RWPE1 (cell line): ENCODE measurements at regions of chr1 and their contacts with region 1.

Region 1: DNA sequence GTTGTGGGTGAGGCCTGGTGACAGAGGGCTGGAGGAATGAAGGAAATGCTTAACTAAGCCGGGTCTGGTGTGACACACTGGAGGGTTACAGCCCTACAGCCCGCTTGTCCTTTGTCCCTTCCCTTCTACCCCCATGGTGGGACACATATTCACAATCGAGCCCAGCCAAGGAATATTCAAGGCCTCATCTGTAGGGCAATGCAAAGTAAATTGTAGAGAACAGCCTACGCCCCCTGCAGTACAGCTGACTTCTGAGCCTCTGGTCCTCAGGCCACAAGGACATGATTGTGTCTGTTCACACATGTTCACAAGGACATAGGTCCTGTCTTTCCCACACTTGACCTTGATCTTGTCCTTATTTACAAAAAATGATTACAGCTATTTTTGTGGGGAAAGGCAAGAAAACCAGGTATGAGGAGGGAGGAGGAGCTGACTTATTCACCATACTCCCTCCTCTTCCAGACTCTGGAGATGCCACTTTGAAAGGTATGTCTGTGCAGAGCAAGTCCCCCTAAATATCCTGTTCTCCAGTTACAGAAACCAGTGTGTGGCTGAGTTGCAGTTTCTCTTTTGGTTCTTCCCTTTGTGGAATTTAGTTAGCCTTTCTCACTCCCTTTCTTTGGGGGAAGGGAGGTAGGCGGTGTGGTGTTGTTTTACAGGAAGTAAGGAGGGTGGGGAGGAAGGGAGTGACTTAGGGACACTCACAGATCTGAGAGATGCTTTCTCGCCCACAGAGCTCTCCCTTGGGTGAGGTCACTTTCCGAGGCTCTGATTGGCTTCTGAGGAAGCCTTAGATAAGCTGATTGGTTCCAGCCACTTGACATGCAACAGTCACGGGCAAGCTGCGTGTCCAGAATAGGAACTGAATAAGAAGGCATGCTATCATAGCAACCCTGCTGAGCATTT is 14.6 kb downstream of the POLR3GL start:
- DNase-seq: peak; percentile 96
- H3K27ac ChIP-seq: peak overlapping the region; percentile 91
- CTCF ChIP-seq: no peak

Region 2: DNA sequence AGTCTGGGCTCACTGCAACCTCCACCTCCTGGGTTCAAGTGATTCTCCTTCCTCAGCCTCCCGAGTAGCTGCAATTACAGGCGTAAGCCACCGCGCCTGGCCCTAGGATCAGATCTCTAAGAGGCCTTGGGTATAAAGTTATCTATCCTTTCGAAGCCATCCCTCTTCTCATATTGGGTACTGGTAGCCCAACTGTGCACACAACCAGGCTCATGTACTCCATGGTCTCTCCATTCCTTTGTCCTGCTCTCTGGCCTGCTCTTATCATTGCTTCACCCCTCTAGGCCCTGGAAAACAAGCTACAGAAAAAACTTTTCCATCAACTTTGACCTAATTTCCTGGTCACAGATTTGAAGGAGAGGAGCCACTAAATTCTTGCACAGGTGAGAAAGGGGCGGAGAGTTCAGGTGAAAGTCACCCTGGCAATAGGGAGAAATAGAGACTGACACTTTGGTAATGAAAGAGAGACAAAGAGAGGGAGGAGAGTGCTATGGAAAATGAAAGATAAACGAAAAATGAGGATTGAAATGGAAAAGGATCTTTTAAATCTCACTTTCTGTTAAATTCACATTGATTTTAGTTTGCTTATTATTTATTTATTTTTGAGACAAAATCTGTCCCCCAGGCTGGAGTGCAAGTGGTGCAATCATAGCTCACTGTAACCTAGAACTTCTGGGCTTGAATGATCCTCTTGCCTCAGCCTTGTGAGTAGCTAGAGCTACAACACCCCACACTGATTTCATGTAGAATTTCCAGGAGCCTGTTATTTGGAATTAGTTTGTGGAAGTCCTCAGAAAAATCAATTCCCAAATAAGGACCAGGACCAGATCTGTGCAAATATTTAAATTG is 11.4 kb after region 1 on chr1:
- CTCF ChIA-PET with region 1: interaction called, 13 read pairs
- POLR2A ChIA-PET with region 1: no interaction called
- DNase-seq: no peak
- H3K27ac ChIP-seq: peak overlapping the region; percentile 69
- CTCF ChIP-seq: no peak

Region 3: DNA sequence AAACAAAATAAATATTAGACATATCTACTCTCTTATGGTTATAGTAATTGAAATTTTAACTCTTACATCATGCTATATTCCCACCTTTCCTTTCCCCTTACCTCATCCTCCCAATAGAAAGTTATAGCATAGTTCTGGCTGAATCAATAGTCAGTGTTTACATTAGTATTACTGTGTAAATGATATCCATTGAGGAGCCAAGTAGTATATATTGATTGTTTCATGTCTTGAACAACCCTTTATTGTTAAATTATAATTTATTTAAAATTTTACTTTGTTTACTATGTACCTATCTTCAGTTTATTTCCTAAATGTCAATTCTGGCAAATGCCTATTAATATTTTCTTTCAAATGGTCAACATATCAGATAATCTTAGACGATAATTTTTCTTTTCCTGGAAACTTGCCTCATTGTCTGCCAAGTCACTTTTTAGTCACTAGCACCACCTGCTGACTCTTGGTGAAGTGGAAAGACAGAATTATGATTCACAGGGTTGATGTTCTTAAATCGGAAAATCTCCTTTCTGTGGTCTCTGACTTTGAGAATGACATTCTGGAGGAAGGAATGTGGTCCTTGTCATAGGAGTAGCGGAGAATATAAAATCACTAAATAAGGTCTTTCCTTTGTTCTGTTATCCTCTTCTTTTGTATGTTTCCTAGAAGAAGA is 33.8 kb after region 1 on chr1:
- CTCF ChIA-PET with region 1: interaction called, 54 read pairs
- POLR2A ChIA-PET with region 1: no interaction called
- DNase-seq: peak; percentile 68
- H3K27ac ChIP-seq: no peak overlapping the region
- CTCF ChIP-seq: peak; percentile 78